CD4-positive, alpha-beta T cell (primary cell): ENCODE measurements at regions of chr1 and their contacts with region 1.

Region 1: GRCh38 chr1:181219938-181220337 is 131.4 kb downstream of the IER5 start:
- DNase-seq: no peak
- ATAC-seq: no peak
- H3K4me3 ChIP-seq: no peak overlapping the region
- H3K4me3 Mint-ChIP-seq: no peak overlapping the region
- H3K27ac ChIP-seq: no peak overlapping the region
- H3K27ac Mint-ChIP-seq: no peak overlapping the region
- H3K4me1 ChIP-seq: no peaks in the 10 kb centered on the region
- H3K4me1 Mint-ChIP-seq: no peaks in the 10 kb centered on the region
- H3K27me3 ChIP-seq: no peaks in the 10 kb centered on the region
- H3K27me3 Mint-ChIP-seq: peaks cover 6% of the 10 kb centered on the region
- CTCF ChIP-seq: no peak

Region 2: DNA sequence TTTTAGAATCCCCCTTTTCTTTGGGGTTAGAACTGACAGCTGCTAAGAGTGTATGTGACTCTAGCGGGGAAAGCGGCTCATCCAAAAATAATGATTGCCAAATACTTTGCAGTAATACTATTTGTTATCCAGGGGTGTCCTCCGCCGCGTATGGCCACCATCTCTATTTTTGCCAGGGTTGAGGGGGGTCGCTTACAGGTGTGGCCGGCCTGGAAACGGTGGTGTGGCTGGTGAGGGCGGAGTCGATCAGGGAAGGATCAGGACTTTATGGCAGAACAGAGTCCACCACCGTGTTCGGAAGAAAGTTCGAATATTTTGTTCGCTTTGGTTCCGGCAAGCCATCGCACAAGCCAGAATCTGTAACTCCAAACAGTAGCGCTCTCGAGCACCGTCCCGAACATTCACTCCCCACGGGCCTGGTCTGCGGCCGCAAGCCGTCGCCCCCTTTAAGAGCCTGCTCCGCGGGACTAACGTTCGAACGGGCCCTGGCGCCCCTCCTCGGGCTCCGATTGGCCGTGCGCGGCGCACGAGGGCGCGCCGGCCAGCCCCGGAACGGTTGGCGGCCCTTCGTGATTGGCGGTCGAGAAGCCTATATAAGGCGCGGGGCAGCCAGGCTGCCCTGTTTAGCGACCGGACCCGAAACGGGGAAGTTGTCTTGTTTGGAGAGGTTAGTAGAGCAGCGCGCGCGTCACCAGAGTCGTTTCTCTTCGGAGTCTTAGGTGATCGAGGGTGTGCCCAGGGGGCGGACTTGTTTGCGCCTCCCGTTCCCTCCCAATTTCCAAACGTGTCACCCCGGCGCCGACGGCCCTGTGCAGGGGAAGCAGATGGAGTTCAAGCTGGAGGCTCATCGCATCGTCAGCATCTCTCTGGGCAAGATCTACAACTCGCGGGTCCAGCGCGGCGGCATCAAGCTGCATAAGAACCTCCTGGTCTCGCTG is 131.6 kb before region 1 on chr1 and contains the start of gene IER5:
- CTCF ChIA-PET with region 1: no interaction called
- POLR2A ChIA-PET with region 1: no interaction called
- intact Hi-C with region 1: no loop called
- DNase-seq: peak; percentile 89 to 98 (median 94)
- ATAC-seq: peak; percentile 70
- H3K4me3 ChIP-seq: peak within 1 kb of the TSS; percentile 90
- H3K4me3 Mint-ChIP-seq: peak within 1 kb of the TSS; percentile 99
- H3K27ac ChIP-seq: peak within 1 kb of the TSS; percentile 95 to 97
- H3K27ac Mint-ChIP-seq: peak within 1 kb of the TSS; percentile 97
- H3K4me1 ChIP-seq: peaks cover 13% of the 10 kb centered on the region
- H3K4me1 Mint-ChIP-seq: peaks cover 53% of the 10 kb centered on the region
- H3K27me3 ChIP-seq: no peaks in the 10 kb centered on the region
- H3K27me3 Mint-ChIP-seq: no peaks in the 10 kb centered on the region
- CTCF ChIP-seq: no peak
- total RNA-seq, gene IER5: 53.8 to 54.1 TPM

Region 3: DNA sequence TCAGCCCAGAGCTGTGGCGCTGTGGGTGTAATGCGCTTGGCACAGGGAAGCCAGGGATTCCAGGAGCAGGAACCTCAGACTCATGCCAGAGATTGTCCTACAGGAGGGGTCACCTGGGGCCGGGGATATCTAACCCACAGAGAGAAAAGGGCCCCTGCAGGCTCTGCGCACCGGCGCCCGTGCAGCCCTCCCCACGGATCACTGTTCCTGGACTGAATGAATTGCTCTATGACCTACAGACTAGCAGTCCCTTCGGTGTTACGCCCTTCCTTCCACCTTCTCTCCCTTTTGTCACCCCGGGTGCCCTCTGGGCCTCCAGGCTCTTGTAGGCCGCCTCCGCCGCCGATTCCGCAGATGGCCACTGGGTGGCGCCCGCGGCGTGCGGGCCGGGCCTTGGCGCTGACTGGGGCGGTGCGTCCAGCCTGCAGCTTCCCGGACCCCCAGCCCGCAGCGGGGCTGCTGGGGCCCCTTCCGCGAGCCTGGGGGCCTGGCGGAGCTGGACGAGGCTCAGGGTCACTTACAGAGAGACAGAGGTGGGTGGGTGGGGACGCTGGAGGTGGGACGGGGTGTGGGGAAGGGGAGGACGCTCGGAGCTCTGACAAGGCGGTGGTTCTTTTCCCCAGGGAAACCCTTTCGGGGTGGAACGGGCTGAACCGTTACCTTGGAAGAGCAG is 30.1 kb before region 1 on chr1:
- CTCF ChIA-PET with region 1: no interaction called
- POLR2A ChIA-PET with region 1: no interaction called
- intact Hi-C with region 1: no loop called
- DNase-seq: peak; percentile 35 to 85 (median 73)
- ATAC-seq: peak; percentile 96
- H3K4me3 ChIP-seq: peak overlapping the region; percentile 20
- H3K4me3 Mint-ChIP-seq: peak overlapping the region; percentile 34
- H3K27ac ChIP-seq: no peak overlapping the region
- H3K27ac Mint-ChIP-seq: no peak overlapping the region
- H3K4me1 ChIP-seq: peaks cover 12% of the 10 kb centered on the region
- H3K4me1 Mint-ChIP-seq: no peaks in the 10 kb centered on the region
- H3K27me3 ChIP-seq: no peaks in the 10 kb centered on the region
- H3K27me3 Mint-ChIP-seq: peaks cover 26% of the 10 kb centered on the region
- CTCF ChIP-seq: peak; percentile 94

Region 4: GRCh38 chr1:182259229-182259872 is 1039.4 kb after region 1 on chr1:
- CTCF ChIA-PET with region 1: no interaction called
- POLR2A ChIA-PET with region 1: no interaction called
- intact Hi-C with region 1: loop called in 1 of 2 experiments (anchors 5 kb)
- DNase-seq: peak; percentile 31 to 81 (median 50)
- ATAC-seq: peak; percentile 89
- H3K4me3 ChIP-seq: peak overlapping the region; percentile 17
- H3K4me3 Mint-ChIP-seq: peak overlapping the region; percentile 64
- H3K27ac ChIP-seq: peak overlapping the region; percentile 54 to 73
- H3K27ac Mint-ChIP-seq: peak overlapping the region; percentile 97
- H3K4me1 ChIP-seq: peaks cover 31% of the 10 kb centered on the region
- H3K4me1 Mint-ChIP-seq: peaks cover 38% of the 10 kb centered on the region
- H3K27me3 ChIP-seq: no peaks in the 10 kb centered on the region
- H3K27me3 Mint-ChIP-seq: no peaks in the 10 kb centered on the region
- CTCF ChIP-seq: no peak